GM12878 (cell line): ENCODE measurements at regions of chr3 and their contacts with region 1.

Region 1: DNA sequence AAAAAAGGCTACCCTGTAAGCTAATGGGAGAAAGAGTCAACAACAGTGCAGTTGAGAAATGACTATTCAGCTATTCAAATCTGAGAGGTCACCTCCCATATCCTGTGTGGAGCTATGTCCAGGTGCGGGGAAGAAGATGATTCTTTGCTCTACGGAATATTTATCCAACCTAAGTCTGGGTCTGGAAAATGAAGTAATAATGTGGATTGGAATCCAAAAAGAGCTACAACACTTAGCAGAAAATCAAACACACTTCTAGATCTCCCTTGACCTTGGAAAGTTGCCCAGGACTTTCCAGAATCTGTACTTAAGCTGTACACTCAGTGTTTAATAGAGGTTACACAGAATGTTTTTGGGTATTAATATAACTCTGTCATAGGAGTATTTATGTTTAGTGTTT is 251.9 kb downstream of the NAALADL2 start:
- DNase-seq: no peak
- ATAC-seq: no peak
- H3K4me3 ChIP-seq: no peak overlapping the region
- H3K27ac ChIP-seq: no peak overlapping the region
- H3K4me1 ChIP-seq: no peaks in the 10 kb centered on the region
- H3K27me3 ChIP-seq: no peaks in the 10 kb centered on the region
- CTCF ChIP-seq: no peak
- EP300 ChIP-seq: no peak
- POLR2A ChIP-seq: no peak
- RAD21 ChIP-seq: no peak

Region 2: DNA sequence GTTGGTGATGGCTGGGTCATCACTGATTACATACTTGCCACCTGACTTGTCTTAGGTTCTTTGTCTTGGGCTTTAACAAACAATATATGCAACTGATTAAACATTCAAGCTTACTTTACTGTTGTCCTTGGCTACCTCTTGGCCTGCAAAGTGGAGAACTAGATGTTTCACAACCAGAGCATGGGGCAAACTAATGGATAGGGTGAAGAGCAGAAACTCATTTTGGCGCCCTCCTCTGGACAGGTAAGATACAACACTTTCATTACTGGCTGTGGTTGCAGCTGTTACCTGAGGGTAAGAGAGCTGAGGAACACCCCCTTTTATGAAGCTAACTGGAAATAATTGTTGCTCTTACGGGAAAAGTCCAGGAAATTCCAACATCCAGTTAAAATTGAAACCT is 10.2 kb after region 1 on chr3:
- CTCF ChIA-PET with region 1: no interaction called
- POLR2A ChIA-PET with region 1: no interaction called
- RAD21 ChIA-PET with region 1: no interaction called
- SMC1A ChIA-PET with region 1: interaction called, 10 read pairs
- in situ Hi-C with region 1: no loop called
- intact Hi-C with region 1: no loop called
- DNase-seq: no peak
- ATAC-seq: no peak
- H3K4me3 ChIP-seq: no peak overlapping the region
- H3K27ac ChIP-seq: no peak overlapping the region
- H3K4me1 ChIP-seq: no peaks in the 10 kb centered on the region
- H3K27me3 ChIP-seq: no peaks in the 10 kb centered on the region
- CTCF ChIP-seq: peak; percentile 6 to 43 (median 12); a peak in 4 of 6 replicates
- EP300 ChIP-seq: no peak
- POLR2A ChIP-seq: no peak
- RAD21 ChIP-seq: no peak